ENCODE measurements at regions of chr2 and their contacts with region 1.

Region 1: DNA sequence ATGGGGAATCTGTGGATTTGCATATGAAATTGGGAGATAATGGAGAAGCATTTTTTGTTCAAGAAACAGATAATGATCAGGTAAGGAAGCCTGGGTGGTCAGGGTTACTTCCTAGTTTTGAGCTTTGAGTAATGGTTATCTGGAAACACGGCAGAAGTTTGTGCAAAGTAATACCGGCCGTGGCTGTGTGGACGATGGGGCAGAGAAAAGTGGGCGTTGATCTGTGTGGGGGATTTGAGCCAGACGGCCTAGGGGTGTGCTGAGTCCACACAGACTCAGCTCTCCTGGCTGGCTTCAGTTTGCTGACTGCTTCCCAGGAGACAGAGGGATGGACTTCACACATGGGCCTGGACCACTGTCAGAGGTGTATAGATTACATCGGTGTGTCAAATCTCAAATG is 21.3 kb downstream of the LPIN1 start:
- DNase-seq: peak in 2 of 4 experiments; percentile 11 to 35
- ATAC-seq: peak; percentile 71
- H3K4me3 ChIP-seq: no peak overlapping the region
- H3K27ac ChIP-seq: peak overlapping the region; percentile 29; the same call in 1 of the 3 replicates
- H3K4me1 ChIP-seq: peaks cover 14 to 27% of the 10 kb centered on the region in 2 experiments
- H3K27me3 ChIP-seq: no peaks in the 10 kb centered on the region
- CTCF ChIP-seq: no peak
- EP300 ChIP-seq: no peak
- POLR2A ChIP-seq: no peak
- RAD21 ChIP-seq: no peak

Region 2: GRCh38 chr2:11743846-11744553 is 23.8 kb before region 1 on chr2:
- CTCF ChIA-PET with region 1: no interaction called
- POLR2A ChIA-PET with region 1: interaction called, 4 read pairs
- in situ Hi-C with region 1: no loop called
- intact Hi-C with region 1: loop called (anchors 2 kb)
- DNase-seq: peak; percentile 96 to 98 (median 97)
- ATAC-seq: peak; percentile 85
- H3K4me3 ChIP-seq: peak overlapping the region; percentile 33
- H3K27ac ChIP-seq: peak overlapping the region; percentile 86
- H3K4me1 ChIP-seq: peaks cover 58 to 66% of the 10 kb centered on the region in 2 experiments; a peak in 4 of 5 replicates
- H3K27me3 ChIP-seq: no peaks in the 10 kb centered on the region
- CTCF ChIP-seq: 0 out of 6 replicates have a peak, but pooled peaks of 1 of the 3 experiments have one; percentile 15
- EP300 ChIP-seq: peak; percentile 90
- POLR2A ChIP-seq: no peak; the same call in 1 of the 2 replicates
- RAD21 ChIP-seq: no peak

Measured in K562 (cell line).